CD4-positive, alpha-beta memory T cell (primary cell): ENCODE measurements at regions of chr5 and their contacts with region 1.

Region 1: DNA sequence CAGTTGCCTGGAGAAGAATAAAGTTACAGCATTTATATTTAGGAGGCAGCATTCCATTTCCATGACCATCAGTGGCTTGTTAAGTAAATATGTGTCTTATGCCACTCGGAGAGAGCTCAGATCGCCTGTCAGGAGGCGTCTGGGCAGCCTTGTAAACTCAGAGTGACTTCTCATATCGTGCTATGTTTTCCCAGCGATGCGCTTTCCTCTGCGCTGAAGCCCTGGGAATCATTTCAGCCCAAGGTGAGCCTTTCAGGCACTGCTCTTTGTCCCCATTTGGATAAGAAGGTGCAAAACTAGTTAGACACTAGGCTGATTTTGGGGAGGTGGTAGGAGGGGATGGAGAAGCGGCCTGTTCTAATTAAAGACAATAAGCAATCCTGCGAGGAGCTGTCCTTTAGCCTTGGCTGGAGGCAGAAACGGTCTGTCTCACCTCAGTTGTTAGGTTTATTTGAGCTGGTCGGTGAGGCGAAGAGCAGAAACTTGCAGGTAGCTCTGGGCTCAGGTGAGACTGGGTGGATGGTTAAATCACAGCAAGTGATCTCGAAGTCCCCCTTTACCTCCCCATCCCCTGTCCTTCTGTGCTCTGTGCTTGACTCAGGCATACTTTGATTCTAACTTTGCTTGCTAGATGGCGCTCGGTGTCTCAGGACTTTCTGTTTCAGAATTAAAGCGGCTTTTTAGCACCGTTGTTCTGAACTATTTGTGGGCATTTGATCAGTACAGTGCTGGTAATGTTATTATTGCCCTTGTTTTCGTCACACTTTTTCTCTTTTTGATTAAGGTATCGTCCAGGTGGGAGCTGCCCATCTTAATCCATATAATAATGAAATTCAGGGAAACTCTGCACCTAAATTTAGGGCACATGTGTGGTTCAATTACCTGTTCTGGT is 24.6 kb downstream of the NR2F1 start:
- DNase-seq: peak in 3 of 5 donors; percentile 47 to 56 (median 52)
- H3K4me3 ChIP-seq: no peak overlapping the region
- H3K4me3 Mint-ChIP-seq: peak overlapping the region in 6 of 8 donors; percentile 2 to 59 (median 27)
- H3K27ac ChIP-seq: no peak overlapping the region
- H3K27ac Mint-ChIP-seq: peak overlapping the region in 1 of 7 donors; percentile 4
- H3K4me1 ChIP-seq: peaks cover 8% of the 10 kb centered on the region
- H3K4me1 Mint-ChIP-seq: peaks cover 15 to 29% (median 16%) of the 10 kb centered on the region in 4 donors
- H3K27me3 ChIP-seq: peaks cover 90% of the 10 kb centered on the region
- H3K27me3 Mint-ChIP-seq: peaks cover 72 to 80% of the 10 kb centered on the region in 2 donors

Region 2: DNA sequence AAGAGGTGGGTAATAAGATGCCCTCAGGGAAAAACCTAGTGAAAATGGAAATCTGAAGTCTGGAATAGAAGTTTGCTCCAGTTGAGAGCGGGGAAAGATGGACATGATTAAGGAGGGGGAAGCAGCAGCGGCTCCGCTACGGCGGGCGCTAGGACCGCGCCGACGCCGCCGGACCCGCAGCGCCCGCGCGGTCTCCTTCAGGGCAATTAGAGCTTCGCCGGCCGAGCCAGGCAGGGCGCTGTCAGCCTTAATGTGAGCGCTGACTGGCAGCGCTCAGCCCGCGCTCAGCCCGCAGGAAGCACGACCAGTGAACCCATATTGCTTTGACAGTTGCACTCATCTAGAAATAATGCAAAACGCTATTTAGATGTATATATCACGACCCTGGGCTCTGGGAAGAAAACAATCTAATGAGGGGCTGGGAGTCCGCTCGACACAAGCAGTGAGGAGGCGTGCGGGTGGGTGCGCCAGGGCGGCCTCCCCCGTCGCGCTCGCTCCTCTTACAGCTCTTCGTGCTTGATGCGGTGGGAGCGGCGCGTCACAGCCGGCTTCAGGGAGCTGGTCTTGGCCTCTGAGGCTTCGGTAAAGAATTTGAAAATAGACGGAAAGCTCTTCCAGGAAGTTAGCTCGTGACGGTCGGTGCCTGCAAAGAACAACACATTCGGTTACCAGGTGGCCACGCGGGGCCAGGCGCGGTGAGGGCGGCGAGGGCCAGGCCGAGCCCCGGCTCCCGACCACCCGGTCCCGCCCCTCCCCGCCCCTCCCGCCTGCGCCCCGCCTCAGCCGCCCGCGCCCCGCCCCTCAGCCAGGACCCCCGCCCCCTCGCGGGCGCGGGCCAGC is 13.1 kb after region 1 on chr5:
- CTCF ChIA-PET with region 1: interaction called, 11 read pairs
- POLR2A ChIA-PET with region 1: no interaction called
- intact Hi-C with region 1: no loop called
- DNase-seq: peak; percentile 63 to 79 (median 68)
- H3K4me3 ChIP-seq: peak overlapping the region; percentile 37 to 67
- H3K4me3 Mint-ChIP-seq: peak overlapping the region; percentile 81 to 97 (median 92)
- H3K27ac ChIP-seq: peak overlapping the region; percentile 36
- H3K27ac Mint-ChIP-seq: peak overlapping the region; percentile 87 to 96 (median 94)
- H3K4me1 ChIP-seq: peaks cover 21% of the 10 kb centered on the region
- H3K4me1 Mint-ChIP-seq: peaks cover 22 to 28% (median 22%) of the 10 kb centered on the region in 4 donors
- H3K27me3 ChIP-seq: no peaks in the 10 kb centered on the region
- H3K27me3 Mint-ChIP-seq: peaks cover 4 to 6% of the 10 kb centered on the region in 2 donors

Region 3: GRCh38 chr5:93705896-93706295 is 98.3 kb after region 1 on chr5:
- CTCF ChIA-PET with region 1: no interaction called
- POLR2A ChIA-PET with region 1: no interaction called
- intact Hi-C with region 1: no loop called
- DNase-seq: no peak
- H3K4me3 ChIP-seq: no peak overlapping the region
- H3K4me3 Mint-ChIP-seq: no peak overlapping the region
- H3K27ac ChIP-seq: no peak overlapping the region
- H3K27ac Mint-ChIP-seq: no peak overlapping the region
- H3K4me1 ChIP-seq: no peaks in the 10 kb centered on the region
- H3K4me1 Mint-ChIP-seq: peaks cover 0 to 11% (median 5%) of the 10 kb centered on the region in 4 donors
- H3K27me3 ChIP-seq: no peaks in the 10 kb centered on the region
- H3K27me3 Mint-ChIP-seq: no peaks in the 10 kb centered on the region

Region 4: GRCh38 chr5:93800988-93801811 is 193.6 kb after region 1 on chr5:
- CTCF ChIA-PET with region 1: interaction called, 20 read pairs
- POLR2A ChIA-PET with region 1: no interaction called
- intact Hi-C with region 1: loop called (anchors 2 kb)
- DNase-seq: peak in 4 of 5 donors; percentile 36 to 44 (median 38)
- H3K4me3 ChIP-seq: no peak overlapping the region
- H3K4me3 Mint-ChIP-seq: no peak overlapping the region
- H3K27ac ChIP-seq: no peak overlapping the region
- H3K27ac Mint-ChIP-seq: no peak overlapping the region
- H3K4me1 ChIP-seq: no peaks in the 10 kb centered on the region
- H3K4me1 Mint-ChIP-seq: peaks cover 0 to 3% (median 0%) of the 10 kb centered on the region in 4 donors
- H3K27me3 ChIP-seq: no peaks in the 10 kb centered on the region
- H3K27me3 Mint-ChIP-seq: no peaks in the 10 kb centered on the region

Region 5: DNA sequence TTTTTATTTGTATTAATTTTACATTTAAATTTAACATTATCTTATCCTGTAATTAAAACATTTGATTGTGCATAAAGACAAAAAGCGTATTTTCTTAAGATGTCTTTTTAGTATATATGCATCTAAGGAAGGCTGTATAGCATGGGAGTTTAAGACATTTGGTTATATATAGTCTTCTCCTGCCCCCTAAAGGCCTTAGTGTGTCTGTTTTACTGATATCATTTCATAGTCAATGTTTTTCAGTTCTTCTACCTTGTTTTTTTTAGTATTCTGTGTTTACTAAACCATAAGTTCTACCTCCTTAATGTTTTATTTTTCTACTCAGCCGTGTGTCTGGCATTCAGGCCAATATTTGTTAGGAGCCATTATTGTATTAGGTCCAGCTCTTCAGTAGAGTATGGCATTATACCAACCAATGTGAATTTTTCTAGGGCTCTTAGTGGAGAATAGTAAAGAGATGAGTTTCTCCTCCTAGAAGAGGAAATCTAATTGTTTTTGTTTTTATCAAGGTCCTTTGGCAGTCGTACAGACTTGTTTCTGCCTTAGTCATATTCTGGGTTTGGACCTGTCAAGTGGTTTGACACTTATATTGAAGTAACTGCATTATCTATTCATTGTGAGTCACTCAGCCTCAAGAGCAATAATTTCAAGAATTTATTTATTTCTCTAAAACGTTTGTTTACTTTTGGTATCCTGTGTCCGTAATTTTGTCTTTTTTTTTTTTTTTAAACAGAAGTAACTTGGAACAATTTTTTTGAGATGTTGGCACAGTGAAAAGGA is 1085.6 kb after region 1 on chr5:
- CTCF ChIA-PET with region 1: no interaction called
- POLR2A ChIA-PET with region 1: no interaction called
- intact Hi-C with region 1: loop called (anchors 5 kb)
- DNase-seq: peak in 4 of 5 donors; percentile 27 to 46 (median 38)
- H3K4me3 ChIP-seq: no peak overlapping the region
- H3K4me3 Mint-ChIP-seq: no peak overlapping the region
- H3K27ac ChIP-seq: no peak overlapping the region
- H3K27ac Mint-ChIP-seq: peak overlapping the region in 2 of 7 donors; percentile 16 to 38
- H3K4me1 ChIP-seq: no peaks in the 10 kb centered on the region
- H3K4me1 Mint-ChIP-seq: peaks cover 0 to 8% (median 2%) of the 10 kb centered on the region in 4 donors
- H3K27me3 ChIP-seq: no peaks in the 10 kb centered on the region
- H3K27me3 Mint-ChIP-seq: no peaks in the 10 kb centered on the region